Activated CD4-positive, alpha-beta memory T cell treated with anti-CD3 and anti-CD28 coated beads, Interleukin-2, amount 10 ng/mL, durations not matched to agents 7 days and 5 days (primary cell): ENCODE measurements at regions of chr9 and their contacts with region 1.

Region 1: DNA sequence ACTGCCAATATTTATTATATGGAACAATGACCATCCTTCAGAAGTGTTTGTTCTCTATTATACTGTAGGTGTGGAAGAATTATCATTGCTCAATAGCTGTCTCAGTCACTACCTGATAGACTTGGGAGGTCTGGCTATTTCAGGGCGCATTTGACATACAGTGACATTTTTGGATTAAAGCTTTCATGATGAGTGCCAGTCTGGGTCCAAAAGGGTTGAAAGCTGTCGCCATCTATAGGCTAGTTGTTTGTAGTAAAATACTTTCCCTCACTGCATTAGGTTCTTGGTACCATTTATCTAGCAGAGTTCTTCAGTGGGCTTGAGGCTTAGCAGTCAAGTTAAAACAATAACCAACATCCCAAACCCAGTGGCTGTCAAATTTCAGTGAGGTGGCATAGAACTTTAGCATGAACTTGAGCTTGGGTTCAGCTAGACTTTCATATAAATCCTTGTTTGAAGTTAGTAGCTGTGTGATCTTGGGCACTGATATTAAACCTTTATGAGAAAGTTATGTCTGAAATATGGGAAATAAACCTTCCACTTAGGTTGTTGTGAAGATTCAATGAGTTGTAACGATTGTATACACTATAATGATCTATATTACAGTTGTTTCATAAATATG is 110.5 kb upstream of the CDKN2B start:
- DNase-seq: peak; percentile 27
- H3K4me3 Mint-ChIP-seq: no peak overlapping the region
- H3K27ac Mint-ChIP-seq: no peak overlapping the region
- H3K4me1 Mint-ChIP-seq: peaks cover 19% of the 10 kb centered on the region
- H3K27me3 Mint-ChIP-seq: peaks cover 48% of the 10 kb centered on the region

Region 2: DNA sequence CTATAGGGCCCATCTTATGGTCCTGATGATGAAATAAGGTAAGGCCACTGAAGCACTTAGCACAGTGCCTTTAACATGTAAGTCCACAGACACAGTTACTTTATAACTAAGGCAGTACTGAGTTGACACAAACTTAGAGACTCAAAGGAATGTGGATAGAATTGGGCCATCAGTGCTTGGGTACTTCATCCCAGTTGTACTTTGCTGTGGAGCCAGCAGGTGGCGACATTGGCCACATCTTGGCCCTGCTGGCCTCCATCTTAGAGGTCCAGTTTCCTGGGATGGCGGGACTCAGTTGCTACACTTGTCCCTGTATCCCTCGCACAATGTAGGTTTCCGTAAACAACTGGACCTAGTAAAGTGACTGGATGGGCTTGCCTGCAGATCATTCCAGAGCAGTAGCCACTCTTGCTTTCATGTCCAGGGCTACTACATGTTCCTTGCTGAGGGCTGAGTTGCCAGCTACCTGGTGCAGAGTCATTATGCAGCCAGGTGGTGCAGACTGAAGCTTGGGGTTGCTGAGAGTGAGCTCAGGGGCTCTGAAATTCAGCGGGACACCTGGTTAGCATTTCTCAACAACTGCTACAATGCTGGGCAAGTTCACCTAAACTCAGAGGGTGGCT is 306.6 kb before region 1 on chr9:
- CTCF ChIA-PET with region 1: interaction called, 59 read pairs
- POLR2A ChIA-PET with region 1: no interaction called
- DNase-seq: peak; percentile 74
- H3K4me3 Mint-ChIP-seq: no peak overlapping the region
- H3K27ac Mint-ChIP-seq: peak overlapping the region; percentile 17
- H3K4me1 Mint-ChIP-seq: peaks cover 27% of the 10 kb centered on the region
- H3K27me3 Mint-ChIP-seq: no peaks in the 10 kb centered on the region

Region 3: GRCh38 chr9:22037954-22038690 is 81.5 kb before region 1 on chr9:
- CTCF ChIA-PET with region 1: interaction called, 60 read pairs
- POLR2A ChIA-PET with region 1: interaction called, 4 read pairs
- DNase-seq: no peak
- H3K4me3 Mint-ChIP-seq: no peak overlapping the region
- H3K27ac Mint-ChIP-seq: no peak overlapping the region
- H3K4me1 Mint-ChIP-seq: peaks cover 44% of the 10 kb centered on the region
- H3K27me3 Mint-ChIP-seq: peaks cover 21% of the 10 kb centered on the region

Region 4: GRCh38 chr9:22079873-22080341 is 39.7 kb before region 1 on chr9:
- CTCF ChIA-PET with region 1: interaction called, 14 read pairs
- POLR2A ChIA-PET with region 1: interaction called, 7 read pairs
- DNase-seq: peak; percentile 57
- H3K4me3 Mint-ChIP-seq: peak overlapping the region; percentile 12
- H3K27ac Mint-ChIP-seq: peak overlapping the region; percentile 86
- H3K4me1 Mint-ChIP-seq: peaks cover 46% of the 10 kb centered on the region
- H3K27me3 Mint-ChIP-seq: peaks cover 36% of the 10 kb centered on the region

Region 5: GRCh38 chr9:22147813-22148524 is 28.3 kb after region 1 on chr9:
- CTCF ChIA-PET with region 1: interaction called, 12 read pairs
- POLR2A ChIA-PET with region 1: no interaction called
- DNase-seq: peak; percentile 25
- H3K4me3 Mint-ChIP-seq: no peak overlapping the region
- H3K27ac Mint-ChIP-seq: no peak overlapping the region
- H3K4me1 Mint-ChIP-seq: peaks cover 24% of the 10 kb centered on the region
- H3K27me3 Mint-ChIP-seq: peaks cover 42% of the 10 kb centered on the region

Region 6: DNA sequence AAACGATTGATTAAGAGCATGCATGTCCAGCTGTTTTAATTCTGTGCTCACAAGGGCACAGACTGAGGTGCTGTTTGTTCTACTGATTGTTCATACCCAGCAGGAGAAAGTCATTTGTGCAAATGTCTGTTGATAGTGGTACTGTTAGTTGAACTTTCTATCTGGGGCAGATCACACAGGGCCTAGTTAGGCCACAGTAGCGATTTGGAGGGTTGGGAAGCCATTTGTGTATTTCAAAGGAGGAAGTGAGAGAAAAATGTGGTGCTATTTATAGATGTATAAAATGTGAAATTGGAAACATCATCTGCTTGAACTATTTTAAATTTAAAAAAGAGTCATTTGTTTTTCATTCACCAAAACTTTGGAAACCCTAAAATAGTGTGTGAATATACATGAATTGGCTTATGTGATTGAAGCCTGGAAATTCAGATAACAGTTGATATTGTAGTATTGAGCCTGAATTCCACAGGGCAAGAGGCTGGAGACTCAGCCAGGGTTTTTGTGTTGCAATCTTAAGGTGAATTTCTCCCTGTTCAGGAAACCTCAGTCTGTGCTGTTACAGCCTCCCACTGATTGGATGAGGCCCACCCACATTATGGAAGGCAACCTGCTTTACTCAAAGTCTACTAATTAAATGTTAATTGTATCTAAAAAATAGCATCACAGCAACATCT is 51.5 kb after region 1 on chr9:
- CTCF ChIA-PET with region 1: no interaction called
- POLR2A ChIA-PET with region 1: no interaction called
- DNase-seq: no peak
- H3K4me3 Mint-ChIP-seq: no peak overlapping the region
- H3K27ac Mint-ChIP-seq: no peak overlapping the region
- H3K4me1 Mint-ChIP-seq: peaks cover 8% of the 10 kb centered on the region
- H3K27me3 Mint-ChIP-seq: peaks cover 11% of the 10 kb centered on the region